ENCODE measurements at regions of chr20 and their contacts with region 1.

Region 1: DNA sequence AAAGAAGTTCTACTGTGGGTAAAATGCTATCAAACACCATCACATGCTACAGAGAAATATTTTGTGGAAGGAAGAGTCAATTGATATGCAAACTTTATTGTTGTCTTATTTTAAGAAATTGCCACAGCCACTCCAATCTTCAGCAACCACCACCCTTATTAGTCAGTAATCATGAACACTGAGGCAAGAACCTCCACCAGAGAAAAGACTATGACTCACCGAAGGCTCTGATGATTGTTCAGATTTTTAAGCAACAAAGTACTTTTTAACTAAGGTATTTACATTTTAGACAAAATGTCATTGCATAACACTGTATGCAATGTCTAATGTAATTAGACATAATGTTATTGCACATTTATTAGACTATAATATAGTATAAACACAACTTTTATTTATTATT is 26.2 kb upstream of the MMP24 start:
- DNase-seq: no peak
- ATAC-seq: no peak
- H3K4me3 ChIP-seq: no peak overlapping the region
- H3K27ac ChIP-seq: no peak overlapping the region
- H3K4me1 ChIP-seq: no peaks in the 10 kb centered on the region
- H3K27me3 ChIP-seq: no peaks in the 10 kb centered on the region
- CTCF ChIP-seq: no peak
- POLR2A ChIP-seq: no peak

Region 2: DNA sequence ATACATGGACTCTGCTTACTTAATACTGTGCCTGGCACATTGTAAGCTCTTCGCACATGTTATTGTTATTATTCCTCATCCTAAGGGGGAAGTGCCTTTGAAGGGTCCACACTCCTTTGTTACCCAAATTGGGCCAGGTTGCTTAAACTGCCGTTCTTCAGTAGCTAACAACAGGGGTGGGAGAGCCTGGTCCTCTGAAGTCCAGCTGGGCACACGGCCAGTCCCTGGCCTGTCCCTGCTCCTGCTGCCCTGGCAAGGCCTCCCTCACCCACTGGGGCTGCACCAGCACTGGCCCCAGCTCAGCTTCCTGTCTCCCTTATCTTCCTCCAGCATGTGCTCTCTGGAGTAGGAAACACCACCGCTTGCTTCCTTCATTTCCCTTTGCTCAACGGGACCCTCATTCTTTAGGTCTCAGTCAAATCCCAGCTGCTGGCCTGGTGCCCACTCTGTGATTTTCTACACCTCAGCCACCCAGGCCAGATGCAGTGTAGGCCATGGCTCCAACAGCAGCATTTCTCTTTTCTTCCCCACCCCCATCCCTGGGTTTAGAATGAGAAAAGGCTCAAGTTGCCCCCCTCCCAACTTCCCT is 33.9 kb before region 1 on chr20:
- intact Hi-C with region 1: loop called in 4 of 10 experiments (anchors 5 kb)
- DNase-seq: peak; percentile 67 to 79 (median 72)
- ATAC-seq: peak; percentile 86 to 97 (median 95)
- H3K4me3 ChIP-seq: no peak overlapping the region
- H3K27ac ChIP-seq: peak overlapping the region in 10 of 12 donors; percentile 2 to 57 (median 38)
- H3K4me1 ChIP-seq: peaks cover 0 to 29% (median 17%) of the 10 kb centered on the region in 12 donors
- H3K27me3 ChIP-seq: no peaks in the 10 kb centered on the region
- CTCF ChIP-seq: no peak
- POLR2A ChIP-seq: no peak

Region 3: GRCh38 chr20:35344354-35344837 is 144.1 kb after region 1 on chr20:
- intact Hi-C with region 1: no loop called
- DNase-seq: peak in 4 of 5 donors; percentile 23 to 72 (median 63)
- ATAC-seq: peak in 3 of 4 donors; percentile 62 to 84 (median 74)
- H3K4me3 ChIP-seq: peak overlapping the region in 1 of 12 donors; percentile 16
- H3K27ac ChIP-seq: peak overlapping the region in 2 of 12 donors; percentile 20 to 43
- H3K4me1 ChIP-seq: peaks cover 0 to 14% (median 6%) of the 10 kb centered on the region in 12 donors
- H3K27me3 ChIP-seq: no peaks in the 10 kb centered on the region
- CTCF ChIP-seq: no peak
- POLR2A ChIP-seq: no peak

Measured in heart left ventricle (tissue), 16 donors.